HepG2 (cell line): ENCODE measurements at regions of chr2 and their contacts with region 1.

Region 1: GRCh38 chr2:164877169-164877568 is 35.5 kb upstream of the COBLL1 start:
- DNase-seq: no peak
- ATAC-seq: no peak
- H3K4me3 ChIP-seq: no peak overlapping the region
- H3K27ac ChIP-seq: peak overlapping the region; percentile 83
- H3K4me1 ChIP-seq: peaks cover 89% of the 10 kb centered on the region
- H3K27me3 ChIP-seq: no peaks in the 10 kb centered on the region
- CTCF ChIP-seq: no peak
- EP300 ChIP-seq: no peak
- POLR2A ChIP-seq: no peak
- RAD21 ChIP-seq: no peak

Region 2: GRCh38 chr2:164737612-164738081 is 139.5 kb before region 1 on chr2:
- CTCF ChIA-PET with region 1: no interaction called
- POLR2A ChIA-PET with region 1: no interaction called
- in situ Hi-C with region 1: no loop called
- intact Hi-C with region 1: no loop called
- DNase-seq: peak; percentile 82
- ATAC-seq: peak; percentile 92
- H3K4me3 ChIP-seq: no peak overlapping the region
- H3K27ac ChIP-seq: peak overlapping the region; percentile 22
- H3K4me1 ChIP-seq: peaks cover 82% of the 10 kb centered on the region
- H3K27me3 ChIP-seq: no peaks in the 10 kb centered on the region
- CTCF ChIP-seq: peak; percentile 93
- EP300 ChIP-seq: no peak
- POLR2A ChIP-seq: no peak
- RAD21 ChIP-seq: peak; percentile 93

Region 3: GRCh38 chr2:164859251-164859800 is 17.8 kb before region 1 on chr2:
- CTCF ChIA-PET with region 1: no interaction called
- POLR2A ChIA-PET with region 1: interaction called, 14 read pairs
- in situ Hi-C with region 1: no loop called
- intact Hi-C with region 1: no loop called
- DNase-seq: no peak
- ATAC-seq: peak; percentile 67
- H3K4me3 ChIP-seq: peak overlapping the region in 1 of 3 experiments; percentile 2; a peak in 1 of 6 replicates
- H3K27ac ChIP-seq: peak overlapping the region; percentile 65
- H3K4me1 ChIP-seq: peaks cover 44% of the 10 kb centered on the region
- H3K27me3 ChIP-seq: no peaks in the 10 kb centered on the region
- CTCF ChIP-seq: no peak
- EP300 ChIP-seq: no peak
- POLR2A ChIP-seq: no peak
- RAD21 ChIP-seq: no peak

Region 4: DNA sequence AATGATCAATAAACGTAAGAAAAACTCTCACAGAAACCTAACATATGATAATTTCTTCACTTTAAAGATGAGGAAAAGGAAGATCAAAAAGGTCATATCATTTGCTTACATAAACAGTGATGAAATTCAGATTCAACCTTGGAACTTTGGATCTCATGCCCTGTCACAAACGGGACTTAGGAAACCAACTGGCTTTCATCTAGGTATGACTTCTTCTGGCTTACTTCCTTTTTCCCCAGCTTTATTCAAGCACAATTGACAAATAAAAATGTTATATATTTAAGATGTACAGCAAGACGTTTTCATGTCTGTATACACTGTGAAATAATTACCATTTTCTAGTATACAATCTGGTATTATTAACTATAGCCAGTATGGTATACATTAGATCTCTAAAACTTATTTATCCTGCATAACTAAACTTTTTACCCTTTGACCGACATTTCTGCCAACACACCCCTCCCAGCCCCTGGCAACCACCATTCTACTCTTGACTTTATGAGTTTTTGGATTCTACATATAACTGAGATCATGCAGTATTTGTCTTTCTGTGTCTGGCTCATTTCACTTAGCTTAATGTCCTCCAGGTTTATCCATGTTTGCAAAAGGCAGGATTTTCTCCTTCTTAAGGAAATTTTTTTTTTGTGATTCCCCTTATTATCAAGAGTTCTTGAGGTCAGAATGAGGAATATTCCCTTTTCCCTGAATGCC is 10.4 kb after region 1 on chr2:
- CTCF ChIA-PET with region 1: no interaction called
- POLR2A ChIA-PET with region 1: interaction called, 8 read pairs
- in situ Hi-C with region 1: no loop called
- intact Hi-C with region 1: loop called (anchors 1 kb)
- DNase-seq: peak; percentile 97
- ATAC-seq: peak; percentile 94
- H3K4me3 ChIP-seq: peak overlapping the region in 2 of 3 experiments; percentile 24 to 34; a peak in 3 of 6 replicates
- H3K27ac ChIP-seq: peak overlapping the region; percentile 94
- H3K4me1 ChIP-seq: peaks cover 50% of the 10 kb centered on the region
- H3K27me3 ChIP-seq: no peaks in the 10 kb centered on the region
- CTCF ChIP-seq: no peak
- EP300 ChIP-seq: peak; percentile 66 to 99
- POLR2A ChIP-seq: no peak
- RAD21 ChIP-seq: no peak; the same call in 1 of the 2 replicates

Region 5: GRCh38 chr2:164910101-164910899 is 33.1 kb after region 1 on chr2:
- CTCF ChIA-PET with region 1: no interaction called
- POLR2A ChIA-PET with region 1: interaction called, 9 read pairs
- in situ Hi-C with region 1: no loop called
- intact Hi-C with region 1: loop called (anchors 5 kb)
- DNase-seq: peak; percentile 63
- ATAC-seq: peak; percentile 70
- H3K4me3 ChIP-seq: no peak overlapping the region
- H3K27ac ChIP-seq: peak overlapping the region; percentile 60
- H3K4me1 ChIP-seq: peaks cover 58% of the 10 kb centered on the region
- H3K27me3 ChIP-seq: no peaks in the 10 kb centered on the region
- CTCF ChIP-seq: no peak
- EP300 ChIP-seq: no peak
- POLR2A ChIP-seq: no peak
- RAD21 ChIP-seq: no peak